Activated CD8-positive, alpha-beta T cell treated with anti-CD3 and anti-CD28 coated beads for 36 hours (primary cell): ENCODE measurements at regions of chr6 and their contacts with region 1.

Region 1: DNA sequence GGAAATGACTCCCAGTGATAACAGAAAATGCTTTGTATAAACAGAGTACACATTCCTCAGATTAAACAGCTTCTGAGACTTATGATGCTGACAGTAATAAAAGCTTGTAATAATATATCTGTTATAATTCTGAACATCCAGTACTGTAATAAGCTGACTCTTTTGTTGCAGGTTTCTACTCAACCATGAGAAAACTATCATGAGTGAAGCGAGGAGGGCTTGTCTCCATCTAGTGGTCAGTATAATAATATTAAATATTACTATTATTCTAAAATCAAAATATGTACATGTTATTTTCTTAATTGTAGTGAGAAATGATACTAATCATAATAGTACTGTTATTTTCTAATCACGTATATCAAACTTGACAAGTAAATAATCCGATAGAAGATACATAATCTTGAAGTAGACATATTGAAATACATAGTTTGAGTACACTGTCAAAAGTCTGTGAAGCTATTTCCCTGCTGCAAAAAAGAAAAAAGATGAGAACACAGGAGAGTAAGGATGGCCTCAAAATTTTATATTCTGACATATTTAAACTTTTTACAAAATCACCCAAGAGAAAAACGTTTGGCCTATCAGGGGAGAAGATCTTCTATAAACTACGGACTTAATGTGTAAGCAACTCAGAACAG is 183.1 kb downstream of the MOXD1 start:
- DNase-seq: no peak
- ATAC-seq: no peak
- H3K4me3 Mint-ChIP-seq: no peak overlapping the region
- H3K27ac Mint-ChIP-seq: no peak overlapping the region
- H3K4me1 Mint-ChIP-seq: no peaks in the 10 kb centered on the region
- H3K27me3 Mint-ChIP-seq: peaks cover 3% of the 10 kb centered on the region
- CTCF ChIP-seq: peak; percentile 44

Region 2: DNA sequence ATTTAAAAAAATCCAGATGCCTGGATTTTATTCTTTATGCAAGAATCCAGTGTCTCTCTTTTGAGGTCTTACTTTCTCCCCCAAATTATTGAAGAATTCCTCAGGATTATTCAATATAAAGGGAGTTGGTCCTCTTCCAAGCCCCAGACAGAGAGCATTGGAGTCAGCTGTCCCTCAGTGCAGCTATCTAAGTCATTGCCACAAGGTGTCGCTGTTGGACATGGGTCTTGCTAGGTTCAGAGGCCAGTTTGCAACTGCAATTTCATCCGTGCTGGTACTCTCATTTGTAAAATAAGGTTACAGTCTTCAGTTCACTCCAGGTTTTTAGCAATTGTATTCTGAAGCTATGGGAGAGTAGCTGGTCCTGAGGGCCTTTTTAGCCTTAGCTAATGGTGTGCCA is 294.8 kb before region 1 on chr6:
- CTCF ChIA-PET with region 1: interaction called, 11 read pairs
- POLR2A ChIA-PET with region 1: no interaction called
- intact Hi-C with region 1: no loop called
- DNase-seq: peak; percentile 73
- ATAC-seq: peak; percentile 69
- H3K4me3 Mint-ChIP-seq: no peak overlapping the region
- H3K27ac Mint-ChIP-seq: no peak overlapping the region
- H3K4me1 Mint-ChIP-seq: no peaks in the 10 kb centered on the region
- H3K27me3 Mint-ChIP-seq: peaks cover 9% of the 10 kb centered on the region
- CTCF ChIP-seq: peak; percentile 78